Natural killer cell (primary cell): ENCODE measurements at regions of chr3 and their contacts with region 1.

Region 1: DNA sequence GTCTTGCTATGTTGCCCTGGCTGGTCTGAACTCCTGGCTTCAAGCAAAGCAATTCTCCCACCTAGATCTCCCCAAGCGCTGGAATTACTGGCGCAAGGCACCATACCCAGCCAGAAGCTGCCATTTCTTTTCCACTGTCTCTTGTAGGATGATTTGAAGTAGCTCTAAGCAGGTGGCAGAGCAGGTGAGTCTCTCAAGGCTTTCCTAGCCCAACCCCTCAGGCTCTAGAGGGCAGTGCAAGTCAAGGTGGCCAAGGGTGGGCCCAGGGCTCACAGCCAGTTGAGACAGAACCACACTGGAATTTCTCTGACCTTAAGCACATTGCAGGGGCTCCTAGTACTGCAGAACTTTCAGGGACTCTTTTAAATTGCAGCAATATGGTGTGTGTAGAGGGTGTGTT is 15.6 kb upstream of the DAG1 start:
- DNase-seq: no peak
- ATAC-seq: no peak
- H3K4me3 ChIP-seq: no peak overlapping the region
- H3K4me3 Mint-ChIP-seq: no peak overlapping the region
- H3K27ac ChIP-seq: no peak overlapping the region
- H3K27ac Mint-ChIP-seq: no peak overlapping the region
- H3K4me1 ChIP-seq: no peaks in the 10 kb centered on the region
- H3K4me1 Mint-ChIP-seq: no peaks in the 10 kb centered on the region
- H3K27me3 ChIP-seq: no peaks in the 10 kb centered on the region
- H3K27me3 Mint-ChIP-seq: no peaks in the 10 kb centered on the region
- CTCF ChIP-seq: no peak

Region 2: DNA sequence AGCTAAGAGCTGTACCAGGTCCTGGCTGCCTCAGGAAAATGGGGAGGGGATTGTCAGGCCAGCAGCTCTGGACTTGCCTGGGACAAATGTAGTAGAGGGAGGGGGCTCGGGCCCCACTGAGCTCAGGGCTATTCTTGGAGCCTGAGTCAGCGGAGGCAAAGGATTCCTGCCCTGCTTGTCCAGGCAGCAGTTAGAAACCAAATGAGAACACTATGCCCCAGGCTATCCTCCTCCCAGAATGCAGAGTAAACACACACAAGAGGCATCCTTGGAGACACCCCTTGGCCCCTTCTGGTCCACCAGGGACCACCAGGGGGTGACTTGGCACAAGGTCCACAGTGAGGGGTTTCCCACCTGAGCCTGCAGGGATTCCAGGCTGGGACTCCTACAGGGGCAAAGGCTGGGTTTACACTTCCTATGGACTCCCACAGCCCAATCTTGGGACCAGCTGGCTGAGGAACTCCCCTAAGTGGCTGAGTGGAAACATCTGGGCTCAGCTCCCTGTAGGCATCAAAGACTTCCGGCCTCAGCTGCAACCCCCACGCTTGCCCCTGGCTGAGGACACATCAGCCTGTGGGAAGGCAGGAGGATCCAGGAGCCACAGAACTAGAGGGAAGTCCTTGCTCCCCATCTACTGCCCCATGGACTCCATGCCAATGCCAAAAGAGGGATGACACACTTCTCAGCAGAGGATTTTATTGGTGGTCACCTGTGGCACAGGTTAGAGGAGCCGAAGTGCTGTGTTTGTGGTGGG is 856.0 kb before region 1 on chr3:
- intact Hi-C with region 1: no loop called
- DNase-seq: no peak
- ATAC-seq: no peak
- H3K4me3 ChIP-seq: no peak overlapping the region
- H3K4me3 Mint-ChIP-seq: no peak overlapping the region
- H3K27ac ChIP-seq: no peak overlapping the region
- H3K27ac Mint-ChIP-seq: no peak overlapping the region
- H3K4me1 ChIP-seq: no peaks in the 10 kb centered on the region
- H3K4me1 Mint-ChIP-seq: peaks cover 0 to 18% of the 10 kb centered on the region in 2 donors
- H3K27me3 ChIP-seq: peaks cover 2% of the 10 kb centered on the region
- H3K27me3 Mint-ChIP-seq: peaks cover 7 to 15% of the 10 kb centered on the region in 2 donors
- CTCF ChIP-seq: no peak

Region 3: GRCh38 chr3:49171119-49171774 is 283.2 kb before region 1 on chr3 and contains the start of gene KLHDC8B:
- intact Hi-C with region 1: loop called (anchors 1 kb)
- DNase-seq: peak; percentile 84 to 86
- ATAC-seq: peak; percentile 83 to 88 (median 84)
- H3K4me3 ChIP-seq: peak within 1 kb of the TSS; percentile 68
- H3K4me3 Mint-ChIP-seq: peak within 1 kb of the TSS; percentile 82
- H3K27ac ChIP-seq: no peak within 1 kb of the TSS
- H3K27ac Mint-ChIP-seq: peak within 1 kb of the TSS in 1 of 2 donors; percentile 84
- H3K4me1 ChIP-seq: peaks cover 25% of the 10 kb centered on the region
- H3K4me1 Mint-ChIP-seq: peaks cover 10 to 16% of the 10 kb centered on the region in 2 donors
- H3K27me3 ChIP-seq: no peaks in the 10 kb centered on the region
- H3K27me3 Mint-ChIP-seq: no peaks in the 10 kb centered on the region
- CTCF ChIP-seq: peak; percentile 97
- total RNA-seq, gene KLHDC8B: 2.4 to 7.0 (median 3.5) TPM

Region 4: DNA sequence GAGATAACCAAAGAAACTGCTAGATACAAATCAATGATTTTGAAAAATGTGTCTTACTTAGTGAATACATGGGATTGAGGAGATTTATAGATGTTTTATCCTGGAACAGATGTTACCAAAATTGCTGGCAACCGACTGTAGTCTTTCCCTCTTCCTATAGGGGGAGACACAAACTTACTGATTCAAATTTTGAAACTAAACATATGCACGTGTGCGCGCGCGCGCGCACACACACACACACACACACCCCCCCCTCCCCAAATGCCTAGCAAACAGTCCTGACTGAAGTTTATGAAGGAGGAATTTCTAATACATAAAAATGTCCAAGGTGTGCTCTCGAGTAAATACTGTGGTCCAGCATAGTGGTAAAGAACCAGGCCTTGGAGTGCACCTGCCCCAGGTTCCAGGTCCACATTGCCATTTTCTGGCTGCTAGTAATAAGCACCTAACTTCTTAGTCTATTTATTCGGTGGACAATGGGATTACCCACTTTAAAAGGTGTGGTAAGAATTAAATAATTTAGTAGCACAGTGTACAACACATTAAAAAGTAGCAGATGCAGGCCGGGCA is 158.9 kb before region 1 on chr3:
- intact Hi-C with region 1: loop called (anchors 1 kb)
- DNase-seq: peak in 1 of 2 donors; percentile 69
- ATAC-seq: peak; percentile 58 to 73 (median 63)
- H3K4me3 ChIP-seq: no peak overlapping the region
- H3K4me3 Mint-ChIP-seq: no peak overlapping the region
- H3K27ac ChIP-seq: no peak overlapping the region
- H3K27ac Mint-ChIP-seq: peak overlapping the region; percentile 42 to 71
- H3K4me1 ChIP-seq: no peaks in the 10 kb centered on the region
- H3K4me1 Mint-ChIP-seq: no peaks in the 10 kb centered on the region
- H3K27me3 ChIP-seq: no peaks in the 10 kb centered on the region
- H3K27me3 Mint-ChIP-seq: no peaks in the 10 kb centered on the region
- CTCF ChIP-seq: peak; percentile 69

Region 5: GRCh38 chr3:49339945-49340800 is 114.3 kb before region 1 on chr3 and contains the start of gene USP4:
- intact Hi-C with region 1: loop called (anchors 1 kb)
- DNase-seq: peak; percentile 79 to 96
- ATAC-seq: peak; percentile 88 to 98 (median 91)
- H3K4me3 ChIP-seq: peak within 1 kb of the TSS; percentile 88
- H3K4me3 Mint-ChIP-seq: peak within 1 kb of the TSS; percentile 91
- H3K27ac ChIP-seq: peak within 1 kb of the TSS; percentile 96
- H3K27ac Mint-ChIP-seq: peak within 1 kb of the TSS; percentile 97 to 100
- H3K4me1 ChIP-seq: peaks cover 51% of the 10 kb centered on the region
- H3K4me1 Mint-ChIP-seq: peaks cover 32 to 42% of the 10 kb centered on the region in 2 donors
- H3K27me3 ChIP-seq: no peaks in the 10 kb centered on the region
- H3K27me3 Mint-ChIP-seq: no peaks in the 10 kb centered on the region
- CTCF ChIP-seq: peak; percentile 49
- total RNA-seq, gene USP4: 110 to 138 (median 135) TPM

Region 6: GRCh38 chr3:49411968-49412631 is 42.4 kb before region 1 on chr3 and contains the starts of genes RHOA and TCTA:
- intact Hi-C with region 1: loop called (anchors 2 kb)
- DNase-seq: peak; percentile 98 to 100
- ATAC-seq: peak; percentile 79 to 91 (median 84)
- H3K4me3 ChIP-seq: peak within 1 kb of the TSS; percentile 77
- H3K4me3 Mint-ChIP-seq: peak within 1 kb of the TSS; percentile 91
- H3K27ac ChIP-seq: peak within 1 kb of the TSS; percentile 90
- H3K27ac Mint-ChIP-seq: peak within 1 kb of the TSS; percentile 97 to 99
- H3K4me1 ChIP-seq: peaks cover 68% of the 10 kb centered on the region
- H3K4me1 Mint-ChIP-seq: peaks cover 66 to 70% of the 10 kb centered on the region in 2 donors
- H3K27me3 ChIP-seq: no peaks in the 10 kb centered on the region
- H3K27me3 Mint-ChIP-seq: no peaks in the 10 kb centered on the region
- CTCF ChIP-seq: no peak
- total RNA-seq, gene RHOA: 342 to 372 (median 370) TPM
- total RNA-seq, gene TCTA: 35.4 to 40.7 (median 36.7) TPM

Region 7: DNA sequence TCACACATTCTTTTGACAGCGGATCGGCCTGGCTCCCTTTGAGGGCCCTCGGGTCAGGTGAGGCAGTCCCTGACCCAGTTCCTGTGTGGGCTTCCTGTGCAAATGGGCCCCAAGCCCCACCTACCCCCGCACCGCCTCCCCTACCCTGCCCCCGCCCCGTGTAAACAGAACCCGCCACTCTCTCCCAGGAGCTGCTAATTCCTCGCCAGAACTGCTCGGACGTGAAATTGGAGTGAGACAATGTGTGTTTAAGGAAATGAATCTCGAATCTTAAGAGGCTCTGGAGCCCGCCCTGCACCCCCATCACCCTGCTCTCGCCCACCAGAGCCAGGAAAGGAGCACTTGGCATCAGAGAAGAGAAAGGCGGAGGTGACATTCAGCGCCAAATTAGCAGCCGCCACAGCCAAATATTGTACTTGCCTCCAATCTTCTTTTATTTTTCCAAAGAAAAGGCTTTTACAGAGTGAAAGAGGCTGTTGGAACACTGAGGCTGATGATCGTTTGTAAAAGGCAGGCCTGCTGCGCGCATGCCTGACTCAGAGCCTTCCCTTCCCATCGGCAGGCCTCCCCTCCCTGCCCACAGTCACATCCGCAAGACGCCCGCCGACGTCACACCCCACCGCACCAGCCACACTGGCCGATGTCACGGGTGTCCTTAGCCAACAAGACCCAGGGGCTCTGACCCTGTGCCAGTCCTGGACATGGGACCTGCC is 995.9 kb after region 1 on chr3:
- intact Hi-C with region 1: no loop called
- DNase-seq: peak; percentile 76 to 91
- ATAC-seq: peak; percentile 75 to 85 (median 83)
- H3K4me3 ChIP-seq: peak overlapping the region; percentile 36
- H3K4me3 Mint-ChIP-seq: peak overlapping the region; percentile 83
- H3K27ac ChIP-seq: peak overlapping the region; percentile 85
- H3K27ac Mint-ChIP-seq: peak overlapping the region; percentile 91 to 98
- H3K4me1 ChIP-seq: peaks cover 68% of the 10 kb centered on the region
- H3K4me1 Mint-ChIP-seq: peaks cover 46 to 77% of the 10 kb centered on the region in 2 donors
- H3K27me3 ChIP-seq: no peaks in the 10 kb centered on the region
- H3K27me3 Mint-ChIP-seq: no peaks in the 10 kb centered on the region
- CTCF ChIP-seq: no peak